Esophagus muscularis mucosa (tissue), 4 donors: ENCODE measurements at regions of chr20 and their contacts with region 1.

Region 1: GRCh38 chr20:23995905-23996666 is 7.5 kb upstream of the GGTLC1 start:
- DNase-seq: no peak
- H3K4me3 ChIP-seq: no peak overlapping the region
- H3K27ac ChIP-seq: no peak overlapping the region
- H3K4me1 ChIP-seq: no peaks in the 10 kb centered on the region
- H3K27me3 ChIP-seq: peaks cover 0 to 5% (median 0%) of the 10 kb centered on the region in 4 donors
- CTCF ChIP-seq: peak; percentile 69 to 81 (median 77)
- EP300 ChIP-seq: no peak
- POLR2A ChIP-seq: no peak

Region 2: GRCh38 chr20:23800878-23801277 is 195.2 kb before region 1 on chr20:
- intact Hi-C with region 1: loop called (anchors 10 kb)
- DNase-seq: no peak
- H3K4me3 ChIP-seq: no peak overlapping the region
- H3K27ac ChIP-seq: no peak overlapping the region
- H3K4me1 ChIP-seq: peaks cover 0 to 5% (median 0%) of the 10 kb centered on the region in 4 donors
- H3K27me3 ChIP-seq: no peaks in the 10 kb centered on the region
- CTCF ChIP-seq: no peak
- EP300 ChIP-seq: no peak
- POLR2A ChIP-seq: no peak

Region 3: GRCh38 chr20:23889775-23890211 is 106.3 kb before region 1 on chr20:
- intact Hi-C with region 1: loop called (anchors 5 kb)
- DNase-seq: peak; percentile 91
- H3K4me3 ChIP-seq: no peak overlapping the region
- H3K27ac ChIP-seq: no peak overlapping the region
- H3K4me1 ChIP-seq: peaks cover 0 to 22% (median 12%) of the 10 kb centered on the region in 4 donors
- H3K27me3 ChIP-seq: no peaks in the 10 kb centered on the region
- CTCF ChIP-seq: peak; percentile 67 to 88 (median 81)
- EP300 ChIP-seq: no peak
- POLR2A ChIP-seq: no peak

Region 4: DNA sequence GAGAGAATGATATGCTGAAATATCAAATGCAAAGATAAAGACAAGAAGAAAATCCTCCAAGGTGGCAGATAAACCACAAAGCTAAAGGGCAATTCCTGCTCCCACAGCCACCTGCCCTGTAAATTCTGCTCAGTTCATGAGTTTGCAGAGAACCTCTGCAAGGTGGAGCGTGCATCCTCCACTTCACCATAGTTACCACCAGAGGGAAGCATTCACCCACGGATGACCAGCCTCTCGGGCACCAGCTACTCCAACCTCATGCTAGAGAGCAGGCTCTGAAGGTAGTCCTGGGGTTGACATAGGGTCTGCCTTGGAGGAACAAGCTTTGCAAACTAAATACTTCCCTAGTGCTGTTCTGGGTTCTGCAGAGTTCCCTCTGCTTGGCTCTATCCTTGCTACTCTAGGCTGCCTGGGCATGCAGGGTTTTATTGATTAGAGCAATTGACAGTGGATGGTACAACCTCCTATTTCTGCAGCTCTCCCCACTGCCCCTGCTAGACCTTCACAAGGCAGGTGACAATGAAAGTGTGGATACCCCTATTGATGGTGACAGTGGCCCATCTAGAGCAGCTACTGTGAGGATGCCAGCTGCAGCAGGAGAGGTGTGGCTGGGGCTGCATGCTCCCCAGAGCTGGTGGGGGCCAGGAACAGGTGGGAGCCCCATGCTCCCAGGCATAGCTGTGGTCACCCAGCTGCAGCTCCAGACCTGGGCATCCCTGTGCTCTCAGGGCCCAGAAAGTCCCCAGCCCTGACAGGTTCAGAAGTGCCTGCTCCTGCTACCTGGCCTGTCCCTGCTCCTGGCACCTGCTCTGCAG is 58.6 kb before region 1 on chr20:
- intact Hi-C with region 1: loop called (anchors 5 kb)
- DNase-seq: peak; percentile 90
- H3K4me3 ChIP-seq: no peak overlapping the region
- H3K27ac ChIP-seq: no peak overlapping the region
- H3K4me1 ChIP-seq: peaks cover 0 to 3% (median 0%) of the 10 kb centered on the region in 4 donors
- H3K27me3 ChIP-seq: peaks cover 0 to 8% (median 0%) of the 10 kb centered on the region in 4 donors
- CTCF ChIP-seq: peak; percentile 70 to 79 (median 78)
- EP300 ChIP-seq: no peak
- POLR2A ChIP-seq: no peak